ENCODE measurements at regions of chr6 and their contacts with region 1.

Region 1: GRCh38 chr6:97059473-97059872 is 134.9 kb downstream of the KLHL32 start:
- DNase-seq: peak; percentile 9 to 26
- ATAC-seq: peak; percentile 51 to 68; a peak in 4 of 6 replicates
- H3K4me3 ChIP-seq: no peak overlapping the region
- H3K27ac ChIP-seq: no peak overlapping the region
- H3K4me1 ChIP-seq: no peaks in the 10 kb centered on the region
- CTCF ChIP-seq: peak; percentile 56
- EP300 ChIP-seq: no peak
- POLR2A ChIP-seq: no peak
- RAD21 ChIP-seq: peak; percentile 56 to 67

Region 2: DNA sequence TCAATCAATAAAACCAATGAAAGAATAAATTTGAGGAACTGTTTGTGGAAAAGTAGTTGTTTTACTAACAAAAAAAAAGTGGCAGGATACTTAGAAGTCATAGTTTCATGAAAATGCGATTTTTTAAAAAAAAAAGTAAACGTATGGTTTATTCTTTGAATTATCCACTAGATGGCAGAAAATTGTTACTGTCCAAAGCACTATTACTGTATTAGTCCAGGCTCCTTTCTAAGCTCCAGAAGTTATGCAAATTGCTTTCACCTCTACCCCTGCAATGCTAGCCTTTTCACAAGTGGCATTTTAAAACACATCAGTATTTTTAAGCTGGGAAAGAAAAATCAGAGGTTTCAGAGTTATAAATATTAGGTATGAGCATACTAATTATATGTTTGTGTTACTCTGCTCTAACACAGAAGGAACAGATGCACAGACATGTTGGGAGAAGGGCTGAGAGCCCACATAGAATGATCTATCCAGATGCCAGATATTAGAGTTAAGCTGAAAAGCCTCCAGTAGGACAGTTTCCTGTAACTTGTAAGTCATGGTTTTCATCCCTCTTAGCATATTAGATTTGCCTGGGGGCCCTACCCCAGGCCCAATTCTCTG is 432.6 kb before region 1 on chr6:
- CTCF ChIA-PET with region 1: interaction called, 14 read pairs
- POLR2A ChIA-PET with region 1: no interaction called
- DNase-seq: peak; percentile 2 to 10
- ATAC-seq: peak in 1 of 2 experiments; percentile 71; a peak in 3 of 6 replicates
- H3K4me3 ChIP-seq: no peak overlapping the region
- H3K27ac ChIP-seq: no peak overlapping the region
- H3K4me1 ChIP-seq: no peaks in the 10 kb centered on the region
- CTCF ChIP-seq: peak; percentile 39
- EP300 ChIP-seq: no peak
- POLR2A ChIP-seq: no peak
- RAD21 ChIP-seq: peak; percentile 39 to 42

Region 3: DNA sequence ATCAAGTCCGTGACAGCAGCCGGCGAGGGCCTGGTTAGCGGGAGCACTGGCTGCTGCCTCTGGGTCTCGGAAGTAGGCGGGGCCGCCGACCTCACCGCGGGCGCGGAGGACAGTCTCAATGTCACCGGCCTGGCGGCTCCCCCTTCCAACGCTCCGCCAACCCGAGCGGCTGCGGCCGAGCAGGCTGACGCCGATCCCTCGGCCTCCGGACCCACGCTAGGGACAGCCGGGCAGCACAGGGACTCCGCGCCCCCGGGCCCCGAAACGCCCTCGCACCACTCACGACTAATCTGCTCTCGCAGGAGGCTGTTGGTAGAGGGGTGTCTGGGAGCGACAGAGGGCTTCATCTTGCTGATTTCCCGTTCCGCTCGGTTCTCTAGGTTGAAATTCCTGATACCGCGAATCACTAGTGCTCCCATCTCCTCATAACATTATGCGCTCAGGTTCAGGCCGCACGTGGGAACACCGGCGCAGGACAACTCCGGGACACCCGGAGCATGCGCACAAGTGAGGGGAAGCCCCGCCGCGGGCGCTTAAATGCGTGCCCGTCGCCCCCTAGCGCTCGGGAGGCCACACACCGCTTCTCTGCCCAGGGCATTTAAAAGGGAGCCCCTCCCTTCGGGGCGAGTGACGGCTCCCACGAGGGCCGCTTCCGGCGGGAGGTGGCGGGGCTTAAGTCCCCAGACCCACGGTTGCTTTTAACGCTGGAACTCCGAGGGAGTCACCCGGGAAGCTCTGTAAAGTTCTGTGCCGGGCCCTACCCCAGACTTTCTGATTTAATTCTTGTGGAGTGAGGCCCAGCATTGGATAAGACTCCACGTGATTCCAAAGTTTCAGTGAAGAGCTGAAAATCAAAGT is 161.9 kb before region 1 on chr6 and contains the start of gene NDUFAF4:
- CTCF ChIA-PET with region 1: interaction called, 35 read pairs
- POLR2A ChIA-PET with region 1: no interaction called
- DNase-seq: peak; percentile 76 to 93
- ATAC-seq: peak; percentile 94 to 96
- H3K4me3 ChIP-seq: peak within 1 kb of the TSS; percentile 93
- H3K27ac ChIP-seq: peak within 1 kb of the TSS; percentile 91 to 97
- H3K4me1 ChIP-seq: peaks cover 17% of the 10 kb centered on the region
- CTCF ChIP-seq: peak; percentile 68
- EP300 ChIP-seq: no peak
- POLR2A ChIP-seq: peak; percentile 46; the same call in 1 of the 2 replicates
- RAD21 ChIP-seq: peak in 1 of 2 experiments; percentile 26; a peak in 2 of 5 replicates
- polyA plus RNA-seq, gene NDUFAF4: 55.4 and 58.7 TPM in 2 replicates

Region 4: DNA sequence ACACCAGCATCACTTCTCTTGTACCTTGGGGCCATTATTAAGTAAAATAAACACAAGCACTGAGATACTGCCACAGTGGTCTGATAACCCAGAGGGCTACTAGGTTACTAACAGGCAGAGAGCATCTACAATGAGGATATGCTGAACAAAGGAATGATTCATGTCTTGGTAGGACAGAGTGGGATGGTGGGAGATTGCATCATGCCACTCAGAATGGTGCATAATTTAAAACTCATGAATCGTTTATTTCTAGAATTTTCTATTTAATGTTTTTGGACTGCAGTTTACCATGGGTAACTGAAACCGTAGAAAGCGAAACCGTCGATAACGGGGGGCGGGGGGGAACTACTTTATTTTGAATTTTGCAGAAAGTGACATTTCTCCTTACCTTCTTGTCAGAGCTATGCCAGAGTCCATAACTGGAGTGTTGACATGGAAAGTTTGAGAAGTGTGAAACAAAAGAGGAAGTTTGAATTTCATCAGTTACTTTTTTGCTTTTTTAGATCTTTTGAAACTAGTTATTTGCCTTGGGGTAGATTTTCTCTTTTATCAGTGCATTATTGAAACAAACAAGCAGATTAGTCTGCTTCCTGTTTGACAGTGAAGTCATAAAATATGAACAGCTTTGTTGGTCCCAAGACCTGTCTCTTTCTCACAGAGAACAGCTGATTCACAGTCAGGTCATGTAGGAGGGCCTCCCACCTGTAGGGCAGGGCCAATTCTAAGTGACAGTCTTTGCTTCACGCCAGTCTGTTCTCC is 10.0 kb before region 1 on chr6:
- CTCF ChIA-PET with region 1: no interaction called
- POLR2A ChIA-PET with region 1: no interaction called
- DNase-seq: no peak
- ATAC-seq: no peak
- H3K4me3 ChIP-seq: no peak overlapping the region
- H3K27ac ChIP-seq: no peak overlapping the region
- H3K4me1 ChIP-seq: no peaks in the 10 kb centered on the region
- CTCF ChIP-seq: no peak
- EP300 ChIP-seq: no peak
- POLR2A ChIP-seq: no peak
- RAD21 ChIP-seq: no peak

Measured in A549 (cell line).